GM10248 (cell line): ENCODE measurements at regions of chr3 and their contacts with region 1.

Region 1: GRCh38 chr3:129016356-129016719 is 15.2 kb downstream of the EFCC1 start:
- DNase-seq: peak; percentile 47
- CTCF ChIP-seq: no peak

Region 2: DNA sequence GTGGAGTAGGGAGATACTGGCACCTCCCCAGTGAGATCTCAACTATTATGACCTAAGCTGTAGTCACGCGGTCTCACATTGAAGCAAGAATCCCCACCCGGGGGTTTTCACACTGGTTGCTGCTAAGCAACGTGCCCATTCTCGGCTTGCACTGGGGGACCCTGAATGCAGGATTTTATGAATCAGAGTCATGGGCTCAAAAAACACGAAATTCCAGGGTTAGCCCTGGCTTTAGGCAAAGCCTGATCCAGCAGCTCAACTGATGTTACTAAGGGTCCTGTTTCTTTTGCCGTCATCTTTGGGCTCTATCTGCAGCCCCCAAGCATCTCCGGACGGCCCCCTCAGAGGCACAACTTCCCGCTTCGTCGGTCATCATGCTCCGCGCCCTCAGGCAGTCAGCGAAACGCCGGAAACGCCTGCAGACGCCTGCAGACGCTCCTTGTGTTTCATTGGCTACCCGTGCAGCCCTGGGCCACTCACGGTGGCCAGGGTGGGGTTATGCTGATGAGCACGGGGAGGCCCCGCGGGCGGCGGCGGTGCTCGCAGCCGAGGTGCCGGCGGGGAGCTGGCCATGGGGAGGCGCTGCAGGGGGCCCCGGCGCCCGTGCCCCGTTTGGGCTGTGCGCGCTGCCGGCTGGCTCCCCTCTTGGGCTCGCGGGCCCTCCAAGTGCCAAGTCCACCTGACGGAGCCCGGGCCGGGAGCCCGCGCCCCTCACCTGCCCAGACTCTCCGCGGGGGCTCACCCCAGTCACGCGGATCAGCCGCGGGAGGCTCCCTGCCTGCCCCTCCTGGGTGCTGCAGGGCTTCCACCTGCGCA is 10.6 kb after region 1 on chr3:
- CTCF ChIA-PET with region 1: interaction called, 36 read pairs
- POLR2A ChIA-PET with region 1: no interaction called
- DNase-seq: peak; percentile 98
- CTCF ChIP-seq: peak; percentile 72

Region 3: GRCh38 chr3:129060276-129061022 is 44.1 kb after region 1 on chr3 and contains the start of gene GP9:
- CTCF ChIA-PET with region 1: no interaction called
- POLR2A ChIA-PET with region 1: no interaction called
- DNase-seq: no peak
- CTCF ChIP-seq: no peak

Region 4: DNA sequence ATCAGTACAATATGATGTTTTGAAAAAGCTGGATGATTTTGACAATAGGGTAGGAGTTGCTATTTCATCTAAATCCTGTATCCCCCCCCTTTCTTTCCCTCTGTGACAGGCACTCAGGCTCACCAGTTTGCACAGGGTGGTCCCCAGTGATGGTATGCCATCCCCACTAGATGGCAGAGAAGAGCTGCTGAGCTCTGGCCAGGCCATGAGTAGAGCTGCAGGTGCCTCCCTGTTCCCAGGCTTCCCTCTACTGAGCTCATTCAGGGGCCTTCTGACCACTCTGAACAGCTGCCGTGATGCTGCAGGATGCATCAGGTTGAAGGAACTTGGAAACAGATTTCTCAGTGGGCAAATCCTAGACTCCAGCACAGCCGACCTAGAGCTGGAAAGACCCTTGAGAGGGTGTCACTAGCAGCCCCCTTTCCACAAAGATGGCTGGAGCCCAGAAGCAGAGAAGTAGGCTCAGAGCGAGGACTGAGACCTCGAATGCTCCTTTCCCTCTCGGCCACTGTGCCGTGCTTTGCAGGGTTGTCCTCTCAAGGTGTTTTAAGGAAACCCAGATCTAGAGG is 367.0 kb after region 1 on chr3:
- CTCF ChIA-PET with region 1: no interaction called
- POLR2A ChIA-PET with region 1: no interaction called
- DNase-seq: peak; percentile 80
- CTCF ChIP-seq: peak; percentile 76